Left ventricle myocardium superior (tissue), 1 donor: ENCODE measurements at regions of chr1 and their contacts with region 1.

Region 1: DNA sequence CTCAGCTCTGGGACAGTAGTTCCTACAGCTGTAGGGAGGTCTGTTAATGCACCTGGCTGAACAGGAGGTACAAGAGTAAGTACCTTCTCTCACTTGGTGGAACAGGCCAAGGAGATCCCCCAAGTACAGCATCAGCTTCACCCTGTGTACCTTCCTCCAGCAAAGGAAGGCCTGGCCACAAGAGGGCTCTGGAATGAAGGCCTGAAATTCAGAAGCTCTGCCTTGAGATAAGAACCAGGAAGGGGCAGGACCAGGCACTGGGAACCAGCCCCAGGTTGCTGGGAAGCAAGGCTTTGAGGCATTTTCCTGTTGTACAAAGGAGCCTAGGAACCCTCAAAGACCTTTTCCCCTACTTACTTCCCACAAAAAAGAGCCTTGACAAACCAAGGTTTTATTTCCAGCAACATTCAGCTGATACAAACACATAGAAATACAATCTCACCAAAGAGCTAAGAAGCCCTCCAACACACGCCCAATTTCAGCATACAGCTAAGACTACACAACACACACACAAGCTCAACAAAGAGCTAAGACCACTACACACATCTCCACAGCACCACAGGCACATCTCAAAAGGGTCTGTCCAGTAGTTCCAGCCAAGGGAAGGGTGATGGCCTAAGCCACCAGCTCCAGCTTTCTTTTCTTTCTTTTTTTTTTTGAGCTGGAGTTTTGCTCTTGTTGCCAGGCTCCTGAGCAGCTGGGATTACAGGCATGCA is 23.5 kb downstream of the F11R start:
- DNase-seq: peak; percentile 64
- ATAC-seq: peak; percentile 91

Region 2: GRCh38 chr1:160726498-160727315 is 270.8 kb before region 1 on chr1:
- intact Hi-C with region 1: loop called (anchors 5 kb)
- DNase-seq: no peak
- ATAC-seq: peak; percentile 83

Region 3: DNA sequence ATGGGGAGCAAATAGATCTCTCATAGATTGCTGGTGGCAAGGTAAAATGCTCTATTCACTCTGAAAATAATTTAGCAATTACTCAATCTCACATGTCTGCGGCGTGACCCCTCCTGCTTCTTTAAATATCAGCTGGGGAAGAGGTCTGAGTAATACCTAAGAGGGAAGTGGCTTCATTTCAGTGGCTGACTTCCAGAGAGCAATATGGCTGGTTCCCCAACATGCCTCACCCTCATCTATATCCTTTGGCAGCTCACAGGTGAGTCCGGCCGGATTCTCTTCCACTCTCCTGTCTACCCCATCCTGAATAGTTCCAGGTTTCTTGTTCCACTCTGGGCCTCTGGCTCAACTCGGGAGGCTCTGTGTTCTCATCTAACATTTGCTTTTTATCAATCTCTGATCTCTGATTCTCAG is 258.4 kb before region 1 on chr1 and contains the start of gene SLAMF7:
- intact Hi-C with region 1: no loop called
- DNase-seq: no peak
- ATAC-seq: no peak
- total RNA-seq, gene SLAMF7: 0.50 TPM

Region 4: GRCh38 chr1:161098210-161099068 is 101.0 kb after region 1 on chr1 and contains the start of gene KLHDC9:
- intact Hi-C with region 1: loop called (anchors 10 kb)
- DNase-seq: peak; percentile 81
- ATAC-seq: peak; percentile 78
- total RNA-seq, gene KLHDC9: 5.2 TPM